Left ventricle myocardium inferior (tissue), 1 donor: ENCODE measurements at regions of chr9 and their contacts with region 1.

Region 1: DNA sequence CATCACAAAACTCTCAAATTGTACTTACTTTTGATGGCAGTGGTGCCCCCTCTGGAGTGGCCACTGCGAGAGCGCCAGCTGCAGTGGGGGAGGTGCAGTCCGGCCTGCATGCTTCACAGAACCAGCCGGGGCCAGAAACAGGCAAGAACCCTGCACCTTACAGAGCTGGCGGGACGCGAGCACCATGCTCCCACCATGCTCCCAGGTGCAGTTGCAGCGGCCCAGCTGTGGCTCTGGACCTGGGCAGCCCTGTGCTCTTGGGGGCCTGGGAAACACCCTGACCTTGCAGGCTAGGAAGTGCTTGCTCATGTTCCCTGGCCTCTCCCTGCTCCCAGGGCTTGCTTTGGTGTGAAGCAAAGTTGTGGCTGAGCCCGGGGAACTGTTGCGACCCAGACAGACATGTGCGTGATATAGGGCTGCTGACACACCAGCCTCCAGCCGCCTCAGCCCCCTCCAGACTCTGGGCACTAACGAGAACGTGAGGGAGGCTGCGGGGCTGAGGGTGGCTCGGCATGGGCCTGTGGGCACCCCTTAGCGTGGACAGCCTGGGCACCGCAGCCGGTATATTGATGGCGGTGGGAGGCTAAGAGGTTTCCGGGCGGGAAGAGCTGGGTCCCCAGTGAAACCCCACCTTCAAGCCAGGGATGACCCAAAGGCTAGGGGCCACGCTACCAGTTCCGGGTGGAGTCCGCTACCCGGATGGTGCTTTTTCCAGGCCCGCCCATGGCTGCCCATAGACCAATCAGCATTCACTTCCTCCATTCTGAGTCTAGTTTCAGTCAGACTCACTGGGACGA is 1809.9 kb upstream of the ACO1 start:
- DNase-seq: no peak
- H3K4me3 ChIP-seq: no peak overlapping the region
- H3K27ac ChIP-seq: no peak overlapping the region
- H3K4me1 ChIP-seq: no peaks in the 10 kb centered on the region
- H3K27me3 ChIP-seq: no peaks in the 10 kb centered on the region
- CTCF ChIP-seq: no peak

Region 2: GRCh38 chr9:30504502-30504905 is 70.0 kb before region 1 on chr9:
- intact Hi-C with region 1: no loop called
- DNase-seq: no peak
- H3K4me3 ChIP-seq: no peak overlapping the region
- H3K27ac ChIP-seq: no peak overlapping the region
- H3K4me1 ChIP-seq: no peaks in the 10 kb centered on the region
- H3K27me3 ChIP-seq: no peaks in the 10 kb centered on the region
- CTCF ChIP-seq: no peak

Region 3: DNA sequence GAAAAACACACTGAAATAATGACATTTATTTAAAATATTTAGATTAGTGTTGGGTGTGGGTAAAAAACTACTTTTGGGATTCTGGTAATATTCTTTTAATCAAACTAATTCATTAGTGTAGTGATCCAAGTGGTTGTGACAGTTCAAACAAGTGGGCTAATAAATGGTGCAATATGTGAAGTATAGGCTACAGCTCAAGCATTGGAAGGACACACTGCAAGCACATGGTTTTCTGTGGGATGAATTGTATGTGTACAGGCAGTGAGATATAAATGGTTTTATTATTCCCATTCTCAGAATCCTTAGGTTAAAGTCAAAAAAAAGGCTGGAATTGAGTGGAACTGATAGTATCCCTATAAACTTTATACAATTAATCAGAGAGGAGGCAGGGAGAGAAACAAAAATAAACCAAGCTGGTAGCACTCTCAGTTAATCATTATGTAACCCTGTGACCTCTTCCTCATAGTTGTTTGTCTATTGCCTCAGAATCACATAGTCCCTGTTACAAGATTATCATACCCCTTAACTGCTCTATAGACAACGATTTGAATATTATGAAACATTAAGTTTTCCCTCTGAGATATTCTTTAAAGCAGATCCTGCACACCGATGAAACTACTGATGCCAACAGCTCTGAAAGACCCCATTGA is 54.5 kb after region 1 on chr9:
- intact Hi-C with region 1: loop called (anchors 10 kb)
- DNase-seq: no peak
- H3K4me3 ChIP-seq: no peak overlapping the region
- H3K27ac ChIP-seq: no peak overlapping the region
- H3K4me1 ChIP-seq: no peaks in the 10 kb centered on the region
- H3K27me3 ChIP-seq: no peaks in the 10 kb centered on the region
- CTCF ChIP-seq: no peak

Region 4: DNA sequence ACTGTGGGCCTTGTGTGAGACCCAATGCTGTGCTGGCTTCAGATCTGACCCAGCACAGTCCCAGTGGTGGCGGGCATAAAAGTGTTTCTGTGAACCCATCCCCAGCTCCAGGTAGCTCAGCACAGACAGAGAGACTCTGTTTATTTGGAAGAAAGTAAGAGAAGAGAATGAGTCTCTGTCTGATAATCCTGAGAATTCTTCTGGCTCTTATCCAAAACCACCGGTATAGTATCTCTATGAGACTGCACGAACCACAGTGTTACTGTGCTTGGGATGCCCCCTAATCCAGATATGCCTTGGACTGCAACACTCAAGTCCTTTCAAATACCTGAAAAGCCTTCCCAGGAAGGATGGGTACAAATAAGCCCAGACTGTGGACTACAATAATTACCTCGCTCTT is 149.1 kb after region 1 on chr9:
- intact Hi-C with region 1: no loop called
- DNase-seq: no peak
- H3K4me3 ChIP-seq: no peak overlapping the region
- H3K27ac ChIP-seq: no peak overlapping the region
- H3K4me1 ChIP-seq: no peaks in the 10 kb centered on the region
- H3K27me3 ChIP-seq: no peaks in the 10 kb centered on the region
- CTCF ChIP-seq: no peak